ENCODE measurements at regions of chr15 and their contacts with region 1.

Region 1: GRCh38 chr15:66912001-66912400 is 153.4 kb upstream of the SMAD3 start:
- DNase-seq: no peak
- ATAC-seq: no peak
- H3K4me3 Mint-ChIP-seq: no peak overlapping the region
- H3K27ac Mint-ChIP-seq: no peak overlapping the region
- H3K4me1 Mint-ChIP-seq: peaks cover 4% of the 10 kb centered on the region; the same call in 1 of the 2 replicates
- H3K27me3 Mint-ChIP-seq: peaks cover 9% of the 10 kb centered on the region; the same call in 1 of the 2 replicates
- CTCF ChIP-seq: no peak

Region 2: GRCh38 chr15:66923438-66923881 is 11.5 kb after region 1 on chr15:
- CTCF ChIA-PET with region 1: interaction called, 10 read pairs
- POLR2A ChIA-PET with region 1: no interaction called
- DNase-seq: peak; percentile 82
- ATAC-seq: peak; percentile 99
- H3K4me3 Mint-ChIP-seq: no peak overlapping the region
- H3K27ac Mint-ChIP-seq: no peak overlapping the region
- H3K4me1 Mint-ChIP-seq: peaks cover 12% of the 10 kb centered on the region
- H3K27me3 Mint-ChIP-seq: peaks cover 3% of the 10 kb centered on the region; the same call in 1 of the 2 replicates
- CTCF ChIP-seq: peak; percentile 53; the same call in 1 of the 2 replicates

Measured in WTC11 (cell line).